ENCODE measurements at regions of chr1 and their contacts with region 1.

Region 1: DNA sequence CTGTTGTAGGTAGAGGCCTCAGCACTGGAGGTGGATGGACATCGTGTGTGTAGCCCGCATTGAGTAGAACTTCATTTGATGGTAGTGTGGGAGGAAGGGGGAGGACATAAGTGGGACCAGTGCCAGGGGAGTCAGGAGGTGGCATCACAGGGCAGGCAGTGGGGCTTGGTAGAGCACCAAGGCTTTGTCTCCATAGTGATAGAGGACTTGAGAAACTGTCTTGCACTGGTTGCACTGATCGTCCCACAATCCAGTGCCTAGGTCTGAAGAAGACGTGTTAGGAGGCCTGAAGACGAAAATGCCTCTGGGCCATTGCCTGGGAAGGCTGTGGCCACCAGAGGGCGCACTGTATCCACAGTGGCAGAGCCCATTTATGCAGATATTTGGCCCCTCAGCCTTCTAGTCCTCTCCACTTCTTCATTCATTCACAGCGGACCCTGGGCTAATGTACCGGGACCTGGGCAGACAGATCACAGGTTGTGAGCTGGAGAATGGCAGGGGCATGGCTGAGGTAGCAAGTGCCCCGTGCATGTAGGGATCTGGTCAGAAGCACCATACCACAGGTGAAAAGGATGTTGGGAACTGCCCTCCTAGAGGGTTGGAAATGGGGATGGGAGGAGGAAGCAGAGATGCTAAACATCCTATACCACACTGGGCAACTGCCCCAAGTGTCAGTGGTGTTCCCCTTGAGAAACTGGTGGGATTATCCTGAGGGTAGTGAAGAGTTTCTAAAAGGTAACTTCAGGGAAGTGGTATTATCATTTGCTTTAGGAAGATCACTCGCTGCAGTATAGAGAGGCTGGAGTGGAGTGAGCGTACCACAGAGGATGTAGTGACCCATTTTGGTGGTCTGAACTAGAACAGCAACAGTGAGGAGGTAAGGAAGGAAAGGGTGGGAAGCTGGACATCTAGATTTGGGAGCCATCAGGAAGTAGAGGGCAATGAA is 95.3 kb downstream of the PIK3R3 start:
- DNase-seq: peak; percentile 82 to 97 (median 91)
- ATAC-seq: peak; percentile 86
- H3K4me3 ChIP-seq: no peak overlapping the region
- H3K4me1 ChIP-seq: peaks cover 6% of the 10 kb centered on the region
- CTCF ChIP-seq: peak; percentile 92

Region 2: GRCh38 chr1:46084553-46085451 is 47.6 kb after region 1 on chr1:
- intact Hi-C with region 1: no loop called
- DNase-seq: no peak
- ATAC-seq: no peak
- H3K4me3 ChIP-seq: no peak overlapping the region
- H3K4me1 ChIP-seq: no peaks in the 10 kb centered on the region
- CTCF ChIP-seq: no peak

Region 3: DNA sequence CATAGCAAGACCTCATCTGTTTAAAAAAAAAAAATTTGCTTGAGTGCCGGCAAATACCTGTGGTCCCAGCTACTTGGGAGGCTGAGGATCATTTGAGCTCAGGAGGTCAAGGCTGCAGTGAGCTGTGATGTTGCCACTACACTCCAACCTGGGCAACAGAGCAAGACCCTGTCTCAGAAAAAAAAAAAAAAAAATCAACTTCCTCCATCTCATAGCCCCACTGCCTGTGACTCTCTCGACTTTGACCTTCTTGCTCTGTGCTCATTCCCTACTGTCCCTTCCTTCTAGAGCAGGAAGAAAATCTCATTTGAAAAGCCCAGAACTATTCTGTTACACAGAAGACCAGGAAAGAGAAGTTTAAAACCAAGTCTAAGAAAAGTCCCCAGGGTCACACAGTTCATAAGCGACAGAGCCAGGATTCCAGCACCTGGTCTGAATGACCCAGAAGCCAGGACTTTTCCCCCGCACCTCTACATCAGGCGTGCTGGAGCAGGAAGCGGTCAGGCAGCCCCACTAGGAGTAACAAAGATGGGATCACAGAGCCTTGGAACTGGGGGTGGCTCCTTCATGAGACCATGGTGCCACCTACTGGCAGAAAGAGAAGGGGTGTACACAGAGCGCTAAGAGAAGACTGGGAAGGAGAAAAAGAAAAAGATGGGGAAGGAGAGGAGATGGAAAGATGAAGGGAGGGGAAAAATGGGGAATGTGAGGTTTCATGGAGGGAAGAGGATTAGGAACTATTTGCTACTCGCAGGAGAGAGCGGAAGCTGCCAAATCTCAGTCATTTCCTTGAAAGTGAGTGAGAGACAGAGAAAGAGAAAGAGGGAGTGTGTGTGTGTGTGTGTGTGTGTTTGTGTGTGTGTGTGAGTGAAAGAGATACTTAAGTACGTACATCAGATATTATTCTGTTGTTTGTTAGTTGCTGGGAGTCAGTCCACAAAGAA is 142.2 kb after region 1 on chr1:
- intact Hi-C with region 1: loop called (anchors 2 to 5 kb)
- DNase-seq: peak in 2 of 3 donors; percentile 75 to 96
- ATAC-seq: peak; percentile 65
- H3K4me3 ChIP-seq: no peak overlapping the region
- H3K4me1 ChIP-seq: peaks cover 7% of the 10 kb centered on the region
- CTCF ChIP-seq: peak; percentile 69